Activated T-helper 2 cell treated with anti-CD3 and anti-CD28 coated beads, Interferon-gamma antibody, Interleukin-2, Interleukin-4, amounts not matched to agents 10 μg/mL and 5 μg/mL and 100 μg/mL, durations not matched to agents 14 hours and 24 hours and 36 hours (primary cell): ENCODE measurements at regions of chr10 and their contacts with region 1.

Region 1: DNA sequence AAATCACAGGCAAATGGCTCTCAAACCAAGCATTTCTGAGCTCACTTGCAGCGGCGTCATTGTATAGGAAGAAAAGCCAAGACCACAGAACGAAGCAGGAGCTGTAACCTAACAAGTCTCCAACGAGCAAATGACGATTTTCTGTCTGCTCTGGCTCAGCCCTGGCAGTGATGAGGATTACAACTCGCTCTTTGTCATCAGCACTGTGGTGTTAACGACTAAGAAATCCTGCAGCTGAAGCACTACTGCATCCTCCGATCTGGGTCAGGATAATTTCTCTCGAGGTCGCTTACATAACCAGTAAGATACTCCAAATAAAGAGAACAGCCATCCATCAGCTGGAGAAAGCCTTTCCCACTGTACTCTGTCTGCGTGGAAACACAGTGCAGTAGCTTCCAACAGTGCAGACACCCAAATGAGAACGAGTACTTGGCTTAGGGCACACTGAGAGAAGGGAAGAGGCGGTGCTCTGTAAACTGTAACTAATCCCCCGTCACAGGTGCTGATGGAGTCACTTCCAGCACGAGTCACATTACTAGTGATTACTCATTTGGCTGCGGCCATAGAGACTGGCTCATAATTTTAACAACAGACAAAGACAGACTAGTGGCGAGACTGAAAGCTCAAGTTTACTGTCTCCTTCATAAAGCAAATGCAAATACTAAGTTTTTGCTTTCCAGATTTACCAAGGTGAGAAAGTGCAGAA is 135.8 kb downstream of the NRBF2 start:
- DNase-seq: peak; percentile 81
- H3K4me3 Mint-ChIP-seq: peak overlapping the region; percentile 92
- H3K27ac Mint-ChIP-seq: peak overlapping the region; percentile 94
- H3K4me1 Mint-ChIP-seq: peaks cover 25% of the 10 kb centered on the region
- H3K27me3 Mint-ChIP-seq: no peaks in the 10 kb centered on the region

Region 2: DNA sequence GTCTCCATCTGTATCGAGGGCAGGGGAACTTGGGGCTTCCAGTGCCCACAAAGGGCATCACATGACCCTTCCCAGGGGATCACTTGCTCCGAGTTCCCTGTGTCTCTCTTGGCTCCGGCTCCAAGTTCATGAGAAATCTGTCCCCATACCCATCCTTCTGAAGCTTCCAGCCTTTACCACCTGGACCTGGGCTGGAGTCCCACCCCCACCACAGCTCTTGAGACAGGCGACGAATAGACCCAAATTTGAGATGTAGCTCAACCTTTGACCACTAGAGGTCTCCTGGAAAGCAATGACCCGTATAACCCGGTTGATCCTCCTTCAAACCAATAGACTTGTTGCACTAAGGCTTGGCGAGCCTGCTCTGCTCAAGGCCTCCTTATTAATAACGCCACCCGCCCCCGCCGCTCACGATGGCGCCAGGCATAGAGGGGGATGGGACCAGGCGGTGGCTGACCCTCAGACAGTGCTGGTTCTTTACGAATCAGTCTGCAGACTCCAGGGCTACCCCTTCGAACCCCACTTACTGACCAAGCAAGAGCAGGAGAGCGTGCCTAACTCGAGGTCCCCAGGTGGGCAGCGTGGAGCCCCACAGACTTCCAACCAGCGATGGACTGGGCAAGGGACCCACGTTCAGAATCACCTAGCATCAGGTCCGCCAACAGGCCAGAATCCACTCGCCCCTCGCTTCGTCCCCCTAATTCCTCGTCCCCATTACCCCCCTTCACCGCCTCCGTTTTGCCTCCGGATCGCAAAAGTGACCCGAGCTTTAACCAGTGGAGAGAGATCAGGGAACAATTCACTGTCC is 1371.9 kb before region 1 on chr10:
- intact Hi-C with region 1: loop called (anchors 5 kb)
- DNase-seq: peak; percentile 56
- H3K4me3 Mint-ChIP-seq: peak overlapping the region; percentile 73
- H3K27ac Mint-ChIP-seq: peak overlapping the region; percentile 83
- H3K4me1 Mint-ChIP-seq: peaks cover 42% of the 10 kb centered on the region
- H3K27me3 Mint-ChIP-seq: no peaks in the 10 kb centered on the region

Region 3: GRCh38 chr10:62851442-62851841 is 417.5 kb before region 1 on chr10:
- intact Hi-C with region 1: loop called (anchors 2 kb)
- DNase-seq: no peak
- H3K4me3 Mint-ChIP-seq: no peak overlapping the region
- H3K27ac Mint-ChIP-seq: peak overlapping the region; percentile 28
- H3K4me1 Mint-ChIP-seq: peaks cover 59% of the 10 kb centered on the region
- H3K27me3 Mint-ChIP-seq: no peaks in the 10 kb centered on the region

Region 4: GRCh38 chr10:63210611-63211196 is 58.2 kb before region 1 on chr10:
- intact Hi-C with region 1: loop called (anchors 2 kb)
- DNase-seq: no peak
- H3K4me3 Mint-ChIP-seq: no peak overlapping the region
- H3K27ac Mint-ChIP-seq: peak overlapping the region; percentile 50
- H3K4me1 Mint-ChIP-seq: peaks cover 44% of the 10 kb centered on the region
- H3K27me3 Mint-ChIP-seq: no peaks in the 10 kb centered on the region

Region 5: DNA sequence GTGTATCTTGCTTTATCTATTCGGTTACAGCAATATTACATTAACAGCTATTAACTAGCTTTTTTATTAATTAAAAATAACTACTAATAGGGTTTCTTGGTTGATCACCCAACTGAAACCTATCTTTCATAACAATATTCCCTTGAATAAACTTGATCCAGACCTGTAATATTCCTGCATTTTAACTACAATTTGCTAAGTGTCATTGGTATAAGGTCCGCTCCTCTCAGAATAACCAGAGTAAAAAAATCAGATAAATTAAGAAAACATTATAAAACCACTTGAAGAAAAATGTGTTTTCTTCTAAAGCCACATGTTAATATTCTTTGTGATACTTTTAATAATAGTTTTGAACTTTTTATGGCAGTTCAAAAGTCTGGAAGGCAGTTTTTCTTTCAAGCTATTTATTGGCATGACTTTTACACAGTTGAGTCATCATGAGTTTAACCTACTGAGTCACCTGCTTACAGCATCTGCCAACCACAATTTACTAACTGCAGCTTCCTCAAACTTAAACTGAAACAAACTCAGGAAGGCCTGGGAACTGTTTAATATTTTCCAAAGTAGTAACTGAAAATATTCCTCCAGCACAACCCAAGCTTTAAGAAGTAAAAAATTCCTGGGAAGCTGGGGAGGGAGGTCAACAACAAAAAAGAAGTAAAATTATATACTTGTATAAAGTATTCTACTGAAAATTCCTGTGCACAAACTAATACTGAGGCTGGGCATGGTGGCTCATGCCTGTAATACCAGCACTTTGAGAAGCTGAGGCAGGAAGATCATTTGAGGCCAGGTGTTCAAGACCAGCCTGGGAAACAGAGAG is 32.6 kb before region 1 on chr10:
- intact Hi-C with region 1: loop called (anchors 1 kb)
- DNase-seq: no peak
- H3K4me3 Mint-ChIP-seq: peak overlapping the region; percentile 21
- H3K27ac Mint-ChIP-seq: peak overlapping the region; percentile 46
- H3K4me1 Mint-ChIP-seq: peaks cover 47% of the 10 kb centered on the region
- H3K27me3 Mint-ChIP-seq: no peaks in the 10 kb centered on the region

Region 6: GRCh38 chr10:63465293-63466143 is 196.6 kb after region 1 on chr10 and contains the start of gene JMJD1C:
- intact Hi-C with region 1: loop called (anchors 2 kb)
- DNase-seq: peak; percentile 47
- H3K4me3 Mint-ChIP-seq: peak within 1 kb of the TSS; percentile 91
- H3K27ac Mint-ChIP-seq: peak within 1 kb of the TSS; percentile 58
- H3K4me1 Mint-ChIP-seq: peaks cover 12% of the 10 kb centered on the region
- H3K27me3 Mint-ChIP-seq: peaks cover 32% of the 10 kb centered on the region
- total RNA-seq, gene JMJD1C: 33.8 and 35.2 TPM in 2 replicates

Region 7: DNA sequence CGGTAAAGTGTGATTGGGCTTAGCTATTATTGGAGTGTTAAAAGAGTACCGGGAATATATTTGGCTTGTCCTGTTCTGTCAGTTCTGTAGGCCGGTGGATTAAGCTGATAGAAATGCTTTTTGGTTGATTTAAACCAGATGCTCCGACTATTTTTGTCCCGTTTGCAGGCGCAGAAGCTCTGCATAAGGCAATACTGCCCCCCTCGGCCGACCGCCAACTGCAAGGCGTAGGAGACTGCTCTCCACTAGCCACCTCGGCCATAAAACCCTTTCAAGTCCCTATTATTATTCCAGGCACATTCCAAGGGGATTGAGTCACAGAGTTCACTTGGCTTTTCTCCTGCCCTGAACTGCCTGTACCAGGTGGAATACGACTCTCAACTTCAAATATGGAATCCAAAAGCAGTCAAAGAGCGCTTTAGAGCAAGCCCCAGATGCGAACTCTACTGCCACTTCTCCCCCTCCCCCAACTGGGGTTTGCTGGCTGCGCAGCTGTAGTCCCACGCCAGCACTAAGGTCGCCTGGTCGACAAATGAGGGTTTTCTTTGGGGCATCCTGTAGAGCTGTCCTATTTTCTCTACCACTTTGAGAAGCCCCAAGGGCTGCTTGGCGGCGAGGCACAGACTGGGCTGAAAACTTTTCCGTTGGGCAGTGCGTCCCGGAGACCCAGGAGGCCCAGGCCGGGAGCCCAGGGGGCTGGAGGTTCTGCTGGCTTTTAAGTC is 360.6 kb after region 1 on chr10:
- intact Hi-C with region 1: loop called (anchors 1 kb)
- DNase-seq: peak; percentile 72
- H3K4me3 Mint-ChIP-seq: peak overlapping the region; percentile 90
- H3K27ac Mint-ChIP-seq: peak overlapping the region; percentile 92
- H3K4me1 Mint-ChIP-seq: peaks cover 40% of the 10 kb centered on the region
- H3K27me3 Mint-ChIP-seq: peaks cover 6% of the 10 kb centered on the region